GM10248 (cell line): ENCODE measurements at regions of chr14 and their contacts with region 1.

Region 1: GRCh38 chr14:22519877-22520685 is 68.9 kb downstream of the DAD1 start:
- DNase-seq: no peak
- CTCF ChIP-seq: no peak

Region 2: DNA sequence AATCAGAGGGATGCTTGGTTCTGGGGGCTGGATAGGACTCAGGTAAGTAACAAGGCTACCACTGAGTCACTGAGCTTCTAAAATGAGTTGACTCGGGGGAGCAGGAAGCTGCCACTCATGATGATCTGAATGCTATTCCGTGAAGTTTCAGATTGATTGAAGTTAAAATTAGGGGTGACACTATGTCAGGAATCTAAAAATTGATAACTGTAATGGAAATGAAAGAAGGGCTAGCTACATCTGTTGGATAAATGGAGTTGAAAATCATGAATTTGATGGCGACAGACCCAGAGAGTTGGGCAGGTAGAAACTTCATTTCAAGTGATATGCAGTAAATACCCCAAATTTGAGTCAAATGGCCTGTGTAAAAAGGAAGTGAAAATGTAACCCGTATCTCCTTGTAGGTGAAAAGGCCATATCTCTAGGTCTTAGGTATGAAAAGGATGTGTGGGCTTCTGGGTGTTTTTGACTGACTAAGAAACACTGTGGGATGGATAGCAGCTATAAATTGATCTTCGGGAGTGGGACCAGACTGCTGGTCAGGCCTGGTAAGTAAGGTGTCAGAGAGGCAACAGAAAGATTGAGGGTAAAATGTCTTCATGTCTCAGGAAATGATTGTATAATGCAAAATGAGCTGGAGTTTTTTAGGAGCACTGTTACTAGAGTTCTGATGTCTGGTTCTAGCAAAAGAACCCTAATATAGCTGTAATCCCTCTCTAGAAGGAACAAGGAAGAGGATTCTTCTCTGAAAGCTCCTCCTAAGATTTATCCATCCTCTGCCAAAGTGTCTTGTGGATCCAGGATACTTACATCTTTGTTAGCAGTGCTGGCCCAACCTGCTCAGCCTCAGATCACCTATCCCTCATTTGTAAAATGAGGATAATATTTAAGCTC is 11.6 kb after region 1 on chr14:
- CTCF ChIA-PET with region 1: interaction called, 25 read pairs
- POLR2A ChIA-PET with region 1: interaction called, 3 read pairs
- DNase-seq: peak; percentile 60
- CTCF ChIP-seq: no peak

Region 3: GRCh38 chr14:22781586-22781991 is 261.5 kb after region 1 on chr14:
- CTCF ChIA-PET with region 1: no interaction called
- POLR2A ChIA-PET with region 1: no interaction called
- DNase-seq: no peak
- CTCF ChIP-seq: no peak